WTC11 (cell line): ENCODE measurements at regions of chr19 and their contacts with region 1.

Region 1: DNA sequence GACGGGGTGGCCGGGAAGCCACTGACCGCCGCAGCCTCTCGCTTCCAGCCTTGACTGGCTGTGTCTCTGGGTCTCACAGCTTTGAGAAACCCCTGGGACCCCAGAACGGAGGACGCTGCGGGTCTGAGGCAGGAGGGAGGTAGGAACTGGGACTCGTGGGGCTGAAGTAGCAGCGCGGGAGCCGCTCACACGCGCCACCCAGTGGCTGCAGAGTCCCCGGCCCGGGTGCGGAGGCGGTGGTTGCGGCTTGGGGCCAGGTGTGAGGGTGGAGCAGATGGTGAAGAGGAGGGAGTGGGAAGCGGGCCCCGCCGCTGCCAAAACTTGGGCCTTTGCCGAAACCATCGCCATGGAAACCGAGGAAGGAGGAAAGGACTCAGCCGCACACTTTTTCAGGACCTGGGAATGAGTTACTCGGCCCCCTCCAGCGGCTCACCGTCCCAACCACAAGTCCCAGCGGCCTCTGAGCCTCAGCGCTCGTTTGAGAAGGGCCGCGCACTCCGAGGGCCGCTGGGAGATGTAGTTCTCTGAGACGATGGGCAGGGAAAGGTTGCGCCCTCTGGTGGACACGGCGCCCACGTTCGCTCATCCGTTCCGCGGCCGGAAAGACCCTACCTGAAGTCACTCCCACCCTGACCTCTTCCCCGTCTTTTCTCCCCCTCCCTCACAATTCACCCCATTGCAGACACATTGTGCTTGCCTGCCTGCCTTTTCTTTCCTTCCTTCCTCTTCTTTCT is 2.2 kb upstream of the SLC17A7 start:
- DNase-seq: peak; percentile 97
- ATAC-seq: peak; percentile 43
- H3K4me3 Mint-ChIP-seq: peak overlapping the region; percentile 63
- H3K27ac Mint-ChIP-seq: no peak overlapping the region
- H3K4me1 Mint-ChIP-seq: peaks cover 35% of the 10 kb centered on the region
- H3K27me3 Mint-ChIP-seq: peaks cover 39% of the 10 kb centered on the region
- CTCF ChIP-seq: peak; percentile 79

Region 2: GRCh38 chr19:49340069-49340864 is 103.3 kb before region 1 on chr19:
- CTCF ChIA-PET with region 1: interaction called, 11 read pairs
- POLR2A ChIA-PET with region 1: no interaction called
- DNase-seq: peak; percentile 60
- ATAC-seq: no peak
- H3K4me3 Mint-ChIP-seq: peak overlapping the region; percentile 32; the same call in 1 of the 2 replicates
- H3K27ac Mint-ChIP-seq: peak overlapping the region; percentile 67; the same call in 1 of the 2 replicates
- H3K4me1 Mint-ChIP-seq: peaks cover 23% of the 10 kb centered on the region
- H3K27me3 Mint-ChIP-seq: peaks cover 35% of the 10 kb centered on the region
- CTCF ChIP-seq: no peak

Region 3: DNA sequence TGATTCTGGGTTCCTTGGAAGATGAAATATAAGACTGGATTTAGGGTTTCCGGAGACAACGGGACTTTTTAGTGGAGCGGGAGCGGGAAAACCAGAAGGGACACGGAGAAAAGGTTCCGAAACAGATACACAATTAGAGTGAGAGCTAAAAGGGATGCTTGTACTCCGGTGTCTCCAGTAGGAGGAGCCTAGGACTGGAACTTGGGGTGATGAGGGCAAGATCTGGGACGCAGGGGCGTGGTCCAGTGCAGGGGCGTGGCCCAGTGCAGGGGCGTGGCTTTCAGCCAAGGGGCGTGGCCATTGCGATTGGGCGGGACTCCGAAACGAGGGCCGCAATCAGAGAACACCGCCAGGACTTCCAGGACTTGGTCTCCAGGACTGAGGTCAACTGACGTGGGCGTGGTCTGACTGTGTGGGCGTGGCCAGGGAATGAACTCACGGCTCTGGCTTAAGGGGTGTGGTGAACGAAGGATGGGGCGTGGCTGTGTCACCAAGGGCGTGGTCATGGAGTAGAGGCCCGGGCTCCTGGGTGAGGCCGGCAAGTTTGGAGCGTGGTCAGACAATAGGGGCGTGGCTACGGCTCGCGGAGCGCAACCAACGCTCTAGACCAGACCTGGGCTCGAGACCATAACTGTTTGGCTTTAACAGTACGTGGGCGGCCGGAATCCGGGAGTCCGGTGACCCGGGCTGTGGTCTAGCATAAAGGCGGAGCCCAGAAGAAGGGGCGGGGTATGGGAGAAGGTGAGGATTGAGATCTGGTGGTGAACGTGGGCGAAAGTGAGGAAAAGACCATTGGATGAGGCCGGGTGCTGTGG is 80.1 kb before region 1 on chr19 and contains the start of gene DKKL1:
- CTCF ChIA-PET with region 1: interaction called, 17 read pairs
- POLR2A ChIA-PET with region 1: interaction called, 4 read pairs
- DNase-seq: peak; percentile 100
- ATAC-seq: peak; percentile 88
- H3K4me3 Mint-ChIP-seq: no peak within 1 kb of the TSS
- H3K27ac Mint-ChIP-seq: no peak within 1 kb of the TSS
- H3K4me1 Mint-ChIP-seq: peaks cover 8% of the 10 kb centered on the region
- H3K27me3 Mint-ChIP-seq: peaks cover 5% of the 10 kb centered on the region
- CTCF ChIP-seq: no peak
- total RNA-seq, gene DKKL1: 2.4 to 3.0 TPM (median 2.9 TPM) in 3 replicates

Region 4: DNA sequence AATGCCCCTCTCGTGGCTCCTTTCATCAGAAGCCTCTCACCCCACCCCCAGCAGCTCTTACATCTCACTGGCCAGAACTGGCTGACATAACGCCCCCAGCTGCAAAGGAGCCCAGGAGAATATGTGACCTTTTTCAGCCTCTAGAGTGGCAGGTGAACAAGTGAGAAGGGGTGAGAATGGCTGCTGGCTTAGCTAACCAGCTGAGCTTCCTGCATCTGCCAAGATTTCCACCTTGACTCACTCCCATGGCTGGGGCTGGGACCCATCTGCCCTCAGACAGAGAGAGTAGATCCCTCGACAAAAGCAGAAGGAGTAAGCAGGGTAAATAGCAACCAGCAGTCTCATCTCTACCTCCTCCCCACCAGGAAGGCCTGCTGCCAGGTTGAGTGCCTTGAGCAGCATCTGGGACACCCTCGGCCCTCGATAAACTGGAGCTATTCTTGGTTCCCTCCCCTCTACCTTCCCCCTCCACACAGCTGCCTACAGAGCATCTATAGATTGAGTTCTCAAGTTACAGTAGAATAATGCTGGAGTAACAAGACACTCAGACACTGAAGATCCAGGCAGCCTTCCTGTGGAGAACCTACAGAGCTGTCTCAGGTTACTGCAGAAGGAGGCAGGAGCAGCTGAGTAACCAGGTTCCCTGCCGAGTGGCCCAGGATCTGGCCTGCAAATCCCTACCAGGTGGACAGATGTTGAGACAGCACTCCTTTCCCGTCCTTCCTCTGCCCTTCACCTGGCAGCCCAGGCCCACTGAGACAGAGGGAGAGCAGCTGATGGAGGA is 39.9 kb before region 1 on chr19:
- CTCF ChIA-PET with region 1: interaction called, 14 read pairs
- POLR2A ChIA-PET with region 1: interaction called, 4 read pairs
- DNase-seq: peak; percentile 81
- ATAC-seq: peak; percentile 98
- H3K4me3 Mint-ChIP-seq: peak overlapping the region; percentile 44
- H3K27ac Mint-ChIP-seq: peak overlapping the region; percentile 99
- H3K4me1 Mint-ChIP-seq: peaks cover 45% of the 10 kb centered on the region
- H3K27me3 Mint-ChIP-seq: peaks cover 4% of the 10 kb centered on the region; the same call in 1 of the 2 replicates
- CTCF ChIP-seq: no peak

Region 5: DNA sequence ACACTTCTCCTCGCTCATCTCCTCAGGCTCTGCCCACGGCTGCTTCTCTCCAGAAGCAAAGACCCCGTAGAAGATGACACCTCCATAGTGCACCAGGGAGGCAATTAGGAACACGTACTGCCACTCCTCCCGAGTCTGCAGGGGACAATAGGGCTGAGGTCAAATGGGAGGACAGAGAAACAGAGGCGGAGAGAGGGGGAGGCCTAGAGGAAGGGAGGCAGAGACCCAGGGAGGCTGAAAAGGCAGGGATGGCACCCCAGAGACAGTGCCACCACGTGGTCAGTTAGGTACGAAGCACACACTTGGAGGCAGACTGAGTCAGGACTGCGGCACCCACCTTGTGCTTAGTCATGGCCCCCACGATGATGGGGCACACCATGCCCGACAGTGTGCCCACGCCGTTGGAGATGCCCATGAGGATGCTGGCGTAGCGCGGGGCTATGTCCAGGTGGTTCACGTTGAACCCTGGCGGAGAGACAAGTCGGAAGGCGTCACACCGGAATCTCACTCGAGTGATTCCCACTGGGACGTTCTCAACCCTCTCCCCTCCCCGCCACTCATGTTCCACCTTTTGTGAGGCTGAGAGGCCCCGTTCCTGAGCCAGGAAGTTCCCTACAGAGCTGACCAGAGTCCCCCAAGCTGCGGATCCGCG is 12.7 kb before region 1 on chr19:
- CTCF ChIA-PET with region 1: interaction called, 34 read pairs
- POLR2A ChIA-PET with region 1: interaction called, 3 read pairs
- DNase-seq: no peak
- ATAC-seq: no peak
- H3K4me3 Mint-ChIP-seq: no peak overlapping the region
- H3K27ac Mint-ChIP-seq: no peak overlapping the region
- H3K4me1 Mint-ChIP-seq: peaks cover 58% of the 10 kb centered on the region
- H3K27me3 Mint-ChIP-seq: peaks cover 98% of the 10 kb centered on the region
- CTCF ChIP-seq: peak; percentile 21; the same call in 1 of the 2 replicates

Region 6: DNA sequence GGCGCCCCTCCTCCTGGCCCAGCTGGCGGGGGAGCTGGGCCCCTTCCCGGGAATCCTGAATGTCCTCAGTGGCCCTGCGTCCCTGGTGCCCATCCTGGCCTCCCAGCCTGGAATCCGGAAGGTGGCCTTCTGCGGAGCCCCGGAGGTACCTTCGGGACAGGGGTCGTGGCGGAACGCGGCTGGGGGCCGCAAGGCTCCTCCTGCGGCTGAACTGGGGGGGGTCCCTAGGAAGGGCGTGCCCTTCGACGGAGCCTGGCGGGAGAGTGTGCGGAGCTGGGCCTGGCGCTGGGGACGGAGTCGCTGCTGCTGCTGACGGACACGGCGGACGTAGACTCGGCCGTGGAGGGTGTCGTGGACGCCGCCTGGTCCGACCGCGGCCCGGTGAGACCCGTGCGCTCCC is 18.1 kb after region 1 on chr19:
- CTCF ChIA-PET with region 1: no interaction called
- POLR2A ChIA-PET with region 1: no interaction called
- DNase-seq: no peak
- ATAC-seq: peak; percentile 57
- H3K4me3 Mint-ChIP-seq: no peak overlapping the region
- H3K27ac Mint-ChIP-seq: no peak overlapping the region
- H3K4me1 Mint-ChIP-seq: no peaks in the 10 kb centered on the region
- H3K27me3 Mint-ChIP-seq: no peaks in the 10 kb centered on the region
- CTCF ChIP-seq: no peak

Region 7: DNA sequence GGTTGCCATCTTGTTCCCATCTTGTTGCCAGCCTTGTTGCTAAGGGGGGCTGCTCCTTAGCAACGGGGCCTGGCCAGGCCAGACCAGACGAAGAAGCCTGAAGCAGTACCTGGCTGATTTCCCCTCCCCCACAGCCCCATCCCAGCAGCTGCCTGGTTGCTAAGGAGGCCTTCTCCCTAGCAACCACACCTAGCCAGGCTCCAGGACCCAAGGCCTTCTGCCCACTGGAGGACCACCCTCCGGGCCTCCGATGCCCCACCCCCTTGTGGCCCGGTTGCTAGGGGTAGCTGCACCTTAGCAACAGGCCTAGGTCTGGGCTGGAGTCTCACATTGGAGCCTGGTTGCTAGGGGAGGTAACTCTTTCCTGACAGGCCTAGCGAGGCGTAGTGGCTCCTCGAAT is 141.5 kb after region 1 on chr19:
- CTCF ChIA-PET with region 1: no interaction called
- POLR2A ChIA-PET with region 1: no interaction called
- DNase-seq: peak; percentile 82
- ATAC-seq: peak; percentile 23
- H3K4me3 Mint-ChIP-seq: no peak overlapping the region
- H3K27ac Mint-ChIP-seq: no peak overlapping the region
- H3K4me1 Mint-ChIP-seq: peaks cover 21% of the 10 kb centered on the region
- H3K27me3 Mint-ChIP-seq: no peaks in the 10 kb centered on the region
- CTCF ChIP-seq: no peak